Spleen (tissue), 13 donors: ENCODE measurements at regions of chr6 and their contacts with region 1.

Region 1: GRCh38 chr6:122530440-122531046 is 58.9 kb upstream of the SERINC1 start:
- DNase-seq: no peak
- H3K4me3 ChIP-seq: no peak overlapping the region
- H3K27ac ChIP-seq: no peak overlapping the region
- H3K4me1 ChIP-seq: no peaks in the 10 kb centered on the region
- H3K27me3 ChIP-seq: peaks cover 0 to 25% (median 0%) of the 10 kb centered on the region in 7 donors
- CTCF ChIP-seq: peak; percentile 69 to 87 (median 83)
- POLR2A ChIP-seq: no peak

Region 2: GRCh38 chr6:122381497-122382265 is 148.9 kb before region 1 on chr6:
- intact Hi-C with region 1: loop called (anchors 5 kb)
- DNase-seq: no peak
- H3K4me3 ChIP-seq: no peak overlapping the region
- H3K27ac ChIP-seq: no peak overlapping the region
- H3K4me1 ChIP-seq: peaks cover 0 to 7% (median 0%) of the 10 kb centered on the region in 6 donors
- H3K27me3 ChIP-seq: peaks cover 0 to 2% (median 0%) of the 10 kb centered on the region in 7 donors
- CTCF ChIP-seq: peak; percentile 31 to 78 (median 60)
- POLR2A ChIP-seq: no peak